Ascending aorta (tissue), 2 donors: ENCODE measurements at regions of chr5 and their contacts with region 1.

Region 1: DNA sequence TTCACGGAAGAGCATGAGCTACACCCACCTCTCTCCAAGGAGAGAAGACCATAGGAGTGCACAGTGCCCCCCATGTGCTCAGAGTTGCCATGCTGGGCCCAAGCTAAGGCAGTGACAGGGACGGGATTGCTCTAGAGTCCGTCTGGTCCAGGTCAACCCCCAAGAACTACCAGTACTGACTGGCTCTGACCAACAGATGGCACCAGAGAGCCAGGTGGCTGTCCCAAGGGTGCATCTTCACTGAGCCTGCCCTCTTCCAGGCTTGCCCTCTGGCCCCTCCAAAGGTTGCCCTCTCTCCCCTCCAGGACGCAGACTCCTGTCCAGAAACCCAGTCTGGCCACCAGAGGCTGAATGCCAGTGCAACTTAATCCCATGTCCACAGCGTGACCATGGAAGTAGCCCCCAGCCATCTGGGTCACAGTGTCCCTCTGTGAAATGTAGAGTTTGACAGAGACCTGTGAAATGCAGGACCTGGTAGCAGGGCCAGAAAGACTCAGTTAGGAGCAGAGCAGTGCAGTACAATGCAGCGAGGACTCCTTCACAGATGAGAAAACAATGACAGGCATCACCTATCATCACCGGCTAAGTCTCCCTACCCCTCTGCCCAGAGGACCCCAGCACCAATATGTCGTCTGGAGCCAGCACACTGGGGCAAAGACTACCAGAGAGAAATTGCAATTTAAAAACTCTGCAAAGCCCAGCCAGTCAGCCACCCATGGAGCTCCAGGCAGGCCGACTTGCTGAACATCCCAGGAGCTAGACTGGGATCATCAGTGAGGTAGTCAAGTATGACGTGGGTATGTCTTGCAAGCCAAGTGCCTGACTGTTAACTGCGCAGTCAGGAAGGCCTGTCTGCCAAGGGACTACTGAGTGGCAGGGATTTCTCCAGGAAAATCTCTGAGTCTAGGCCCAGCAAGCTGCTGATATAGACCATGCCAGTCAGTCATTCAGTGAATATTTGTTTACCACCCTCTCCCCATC is 7.7 kb upstream of the SKP1 start:
- DNase-seq: peak in 1 of 2 donors; percentile 72
- H3K4me3 ChIP-seq: no peak overlapping the region
- H3K27ac ChIP-seq: no peak overlapping the region
- H3K4me1 ChIP-seq: no peaks in the 10 kb centered on the region
- H3K27me3 ChIP-seq: no peaks in the 10 kb centered on the region
- CTCF ChIP-seq: peak; percentile 78 to 87 (median 87)

Region 2: DNA sequence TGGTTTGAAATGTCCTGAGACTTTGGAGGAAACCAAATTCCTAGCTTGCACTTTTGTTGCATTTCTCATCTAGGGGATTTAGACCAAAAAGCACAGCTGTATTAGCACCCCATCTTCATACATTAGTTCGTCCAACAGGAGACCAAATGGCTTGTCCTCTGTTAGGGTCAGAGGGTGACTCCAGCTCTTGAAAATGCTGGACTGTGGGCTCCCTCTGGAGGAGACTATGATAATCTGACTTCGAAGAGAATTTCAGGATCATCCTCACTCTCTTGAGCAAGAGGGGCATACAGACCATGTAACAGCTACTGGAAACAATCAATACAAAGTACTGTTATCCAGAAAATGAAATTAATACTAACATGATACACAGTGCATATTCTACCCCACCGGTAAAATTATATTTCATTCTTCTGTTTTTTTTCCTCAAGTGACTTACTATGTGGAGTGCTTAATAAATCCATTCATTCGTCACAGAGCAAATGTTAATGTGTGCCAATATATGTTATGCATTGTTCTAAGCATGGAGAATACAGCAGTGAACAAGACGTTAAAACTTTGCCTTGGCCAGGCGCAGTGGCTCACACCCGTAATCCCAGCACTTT is 105.2 kb after region 1 on chr5:
- intact Hi-C with region 1: loop called (anchors 1 kb)
- DNase-seq: peak in 1 of 2 donors; percentile 66
- H3K4me3 ChIP-seq: no peak overlapping the region
- H3K27ac ChIP-seq: no peak overlapping the region
- H3K4me1 ChIP-seq: no peaks in the 10 kb centered on the region
- H3K27me3 ChIP-seq: no peaks in the 10 kb centered on the region
- CTCF ChIP-seq: peak; percentile 47 to 71 (median 57)